ACHN (cell line): ENCODE measurements at regions of chr10 and their contacts with region 1.

Region 1: DNA sequence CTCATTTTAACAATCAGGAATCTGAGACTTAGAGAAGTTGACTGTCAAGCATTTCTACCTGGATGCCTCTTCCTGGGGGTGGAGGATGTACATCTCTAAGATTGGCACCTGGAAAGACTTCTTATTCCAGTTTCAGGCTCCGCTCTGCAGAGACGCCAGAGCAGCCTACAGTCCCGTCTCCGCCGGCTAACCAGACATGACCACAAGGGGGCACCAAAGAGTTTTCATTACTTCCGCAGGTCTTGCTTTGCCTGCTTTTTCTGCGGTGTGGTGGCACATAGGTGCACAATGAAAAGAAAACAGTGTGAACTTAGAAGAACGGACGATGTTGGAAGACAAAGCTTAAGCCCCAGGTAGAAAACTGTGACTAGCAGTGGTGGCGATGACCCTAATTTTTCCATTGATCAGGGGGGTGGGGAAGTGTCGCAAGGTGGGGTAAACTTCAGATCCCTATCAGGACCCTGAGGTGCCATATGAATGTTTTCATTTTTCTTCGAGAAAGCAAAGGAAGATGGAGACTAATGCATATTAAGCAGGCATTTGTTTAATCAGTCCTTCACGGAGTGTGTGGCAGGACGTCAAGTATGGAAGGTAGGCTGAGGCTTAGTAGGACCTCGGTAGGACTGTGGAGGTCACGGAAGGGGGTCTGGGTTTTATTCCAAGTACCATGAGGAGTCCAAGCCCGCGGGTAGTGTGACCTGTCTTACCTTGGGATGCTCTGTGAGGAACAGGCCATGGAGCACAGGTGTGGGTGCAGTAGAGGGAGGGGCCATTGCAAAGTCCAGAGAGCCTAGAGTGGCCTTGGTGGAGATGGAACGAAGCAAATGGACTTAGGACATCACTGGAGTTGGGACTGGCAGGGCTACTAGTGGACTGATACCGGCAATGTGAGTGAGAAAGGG is 60.1 kb upstream of the SORCS3 start:
- DNase-seq: peak; percentile 79

Region 2: DNA sequence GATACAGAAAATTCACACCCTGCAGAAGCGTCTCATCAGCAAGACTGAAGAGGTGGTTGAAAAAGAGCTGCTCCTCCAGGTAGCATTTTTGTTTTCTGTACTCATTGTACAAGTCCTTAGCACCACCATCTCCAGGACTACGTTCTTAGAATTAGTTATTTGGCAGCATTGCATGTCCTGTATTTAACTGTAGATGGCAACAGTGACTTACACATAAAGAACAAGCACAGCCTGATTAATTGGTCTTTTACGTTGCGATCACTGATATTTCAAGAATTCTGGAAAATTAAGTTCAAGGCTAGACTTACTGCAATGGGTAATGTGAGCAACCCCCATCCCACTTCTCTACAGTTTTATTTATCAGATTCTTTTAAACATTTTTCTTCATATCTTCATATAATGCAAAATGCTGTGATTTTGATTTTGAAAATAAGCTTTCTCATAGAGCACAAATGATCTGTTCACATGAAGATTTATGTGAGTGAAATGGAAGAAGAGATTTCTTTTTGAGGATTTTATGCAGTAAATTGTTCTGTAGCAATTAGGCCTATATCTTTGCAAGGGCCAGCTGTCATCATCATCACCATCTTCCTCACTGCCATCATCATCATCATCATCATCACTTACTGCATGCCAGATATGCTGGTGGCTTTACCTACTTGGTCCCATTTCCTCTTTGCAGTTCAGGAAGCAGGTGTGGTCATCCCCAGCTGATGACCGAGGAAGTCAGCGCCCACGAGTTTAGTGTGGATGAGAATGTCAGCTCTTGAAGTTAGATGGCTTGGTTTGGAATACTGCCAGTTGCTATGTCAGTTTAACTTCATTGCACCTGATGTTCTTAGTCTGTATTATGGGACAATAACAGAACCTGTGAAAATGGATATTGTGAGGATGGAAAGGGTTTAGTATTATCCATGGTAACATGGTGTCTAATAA is 174.0 kb before region 1 on chr10:
- in situ Hi-C with region 1: loop called (anchors 25 kb)
- DNase-seq: peak; percentile 67

Region 3: GRCh38 chr10:104445359-104445758 is 135.7 kb before region 1 on chr10:
- in situ Hi-C with region 1: no loop called
- DNase-seq: peak; percentile 78

Region 4: DNA sequence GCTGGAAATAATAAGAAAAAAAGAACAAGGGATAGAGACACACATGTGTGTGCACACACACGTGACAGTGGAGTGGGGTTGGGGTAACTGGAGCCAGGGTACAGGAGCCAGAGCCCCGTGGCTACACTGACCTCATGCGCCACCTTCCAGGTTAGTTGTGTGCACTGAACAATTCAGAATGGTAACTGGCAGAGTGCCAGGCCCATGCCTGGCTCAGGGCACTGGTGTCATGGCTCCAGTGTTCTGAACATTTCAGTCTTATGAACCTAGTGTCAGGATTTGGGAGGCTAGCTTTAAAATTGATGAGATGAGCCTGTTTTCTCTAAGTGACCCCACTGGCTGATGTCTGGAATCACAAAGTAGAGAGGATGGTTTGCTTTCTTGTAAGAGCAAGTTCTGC is 329.7 kb after region 1 on chr10:
- in situ Hi-C with region 1: no loop called
- DNase-seq: no peak